ENCODE measurements at regions of chr3 and their contacts with region 1.

Region 1: GRCh38 chr3:142523921-142524566 is 54.5 kb downstream of the ATR start:
- DNase-seq: no peak
- ATAC-seq: no peak
- H3K4me3 ChIP-seq: no peak overlapping the region
- H3K27ac ChIP-seq: no peak overlapping the region
- H3K4me1 ChIP-seq: no peaks in the 10 kb centered on the region
- H3K27me3 ChIP-seq: no peaks in the 10 kb centered on the region
- CTCF ChIP-seq: no peak
- POLR2A ChIP-seq: no peak

Region 2: DNA sequence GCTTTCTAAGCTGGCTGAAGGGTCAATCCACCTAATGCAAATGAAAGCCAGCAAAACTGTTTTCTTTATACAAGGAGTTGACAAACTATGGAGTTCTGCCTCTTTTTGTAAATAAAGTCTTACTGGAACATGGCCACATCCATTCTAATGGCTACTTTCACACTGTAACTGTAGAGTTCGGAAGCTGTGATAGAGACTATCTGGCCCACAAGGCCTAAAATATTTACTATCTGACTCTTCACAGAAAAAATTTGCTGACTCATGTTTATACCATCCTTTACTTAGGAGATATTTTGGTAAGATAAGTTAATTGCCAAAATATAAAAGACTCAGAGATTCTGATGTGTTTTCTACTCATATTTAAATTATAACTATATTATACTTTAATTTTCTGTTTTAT is 204.9 kb before region 1 on chr3:
- intact Hi-C with region 1: no loop called
- DNase-seq: no peak
- ATAC-seq: no peak
- H3K4me3 ChIP-seq: no peak overlapping the region
- H3K27ac ChIP-seq: no peak overlapping the region
- H3K4me1 ChIP-seq: peaks cover 0 to 6% (median 0%) of the 10 kb centered on the region in 12 donors
- H3K27me3 ChIP-seq: no peaks in the 10 kb centered on the region
- CTCF ChIP-seq: no peak
- POLR2A ChIP-seq: no peak

Region 3: DNA sequence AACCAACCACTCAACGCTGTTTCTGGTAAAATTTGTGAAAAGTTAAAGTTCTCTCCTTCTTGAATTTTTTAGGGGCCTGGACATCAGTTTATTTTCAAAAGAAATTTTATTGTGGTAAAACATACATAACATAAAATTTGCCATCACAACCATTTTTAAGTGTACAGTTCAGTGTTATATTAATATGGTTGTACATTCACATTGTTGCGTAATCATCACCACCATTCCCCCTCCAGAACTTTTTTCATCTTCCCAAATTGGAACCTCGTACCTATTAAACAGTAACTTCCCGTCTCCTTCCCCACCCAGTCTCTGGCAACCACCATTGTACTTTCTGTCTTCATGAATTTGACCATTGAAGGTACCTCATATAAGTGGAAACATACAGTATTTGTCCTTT is 53.2 kb before region 1 on chr3:
- intact Hi-C with region 1: no loop called
- DNase-seq: no peak
- ATAC-seq: no peak
- H3K4me3 ChIP-seq: no peak overlapping the region
- H3K27ac ChIP-seq: no peak overlapping the region
- H3K4me1 ChIP-seq: no peaks in the 10 kb centered on the region
- H3K27me3 ChIP-seq: no peaks in the 10 kb centered on the region
- CTCF ChIP-seq: no peak
- POLR2A ChIP-seq: no peak

Region 4: DNA sequence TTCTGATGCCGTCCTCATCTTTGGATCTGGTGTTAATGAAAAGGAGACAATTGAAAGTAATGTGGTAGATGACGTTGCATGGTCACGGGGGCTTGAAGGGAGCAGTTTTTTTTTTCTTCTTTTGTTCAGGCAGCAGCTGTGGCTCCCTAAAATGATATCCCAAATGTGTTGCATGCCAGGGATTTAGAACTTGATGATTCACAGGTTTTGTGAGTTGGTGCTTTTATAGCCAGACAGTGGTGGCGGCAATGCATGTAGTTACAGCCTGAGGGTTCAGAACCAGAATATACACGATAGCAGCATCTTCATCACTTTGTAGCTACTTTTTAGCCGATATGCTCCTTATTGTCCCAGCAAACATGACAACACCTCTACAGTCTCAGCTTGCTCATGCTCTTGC is 728.9 kb after region 1 on chr3:
- intact Hi-C with region 1: loop called in 1 of 10 experiments (anchors 5 kb)
- DNase-seq: no peak
- ATAC-seq: no peak
- H3K4me3 ChIP-seq: no peak overlapping the region
- H3K27ac ChIP-seq: no peak overlapping the region
- H3K4me1 ChIP-seq: no peaks in the 10 kb centered on the region
- H3K27me3 ChIP-seq: no peaks in the 10 kb centered on the region
- CTCF ChIP-seq: no peak
- POLR2A ChIP-seq: no peak

Measured in heart left ventricle (tissue), 16 donors.